PC-3 (cell line): ENCODE measurements at regions of chr1 and their contacts with region 1.

Region 1: DNA sequence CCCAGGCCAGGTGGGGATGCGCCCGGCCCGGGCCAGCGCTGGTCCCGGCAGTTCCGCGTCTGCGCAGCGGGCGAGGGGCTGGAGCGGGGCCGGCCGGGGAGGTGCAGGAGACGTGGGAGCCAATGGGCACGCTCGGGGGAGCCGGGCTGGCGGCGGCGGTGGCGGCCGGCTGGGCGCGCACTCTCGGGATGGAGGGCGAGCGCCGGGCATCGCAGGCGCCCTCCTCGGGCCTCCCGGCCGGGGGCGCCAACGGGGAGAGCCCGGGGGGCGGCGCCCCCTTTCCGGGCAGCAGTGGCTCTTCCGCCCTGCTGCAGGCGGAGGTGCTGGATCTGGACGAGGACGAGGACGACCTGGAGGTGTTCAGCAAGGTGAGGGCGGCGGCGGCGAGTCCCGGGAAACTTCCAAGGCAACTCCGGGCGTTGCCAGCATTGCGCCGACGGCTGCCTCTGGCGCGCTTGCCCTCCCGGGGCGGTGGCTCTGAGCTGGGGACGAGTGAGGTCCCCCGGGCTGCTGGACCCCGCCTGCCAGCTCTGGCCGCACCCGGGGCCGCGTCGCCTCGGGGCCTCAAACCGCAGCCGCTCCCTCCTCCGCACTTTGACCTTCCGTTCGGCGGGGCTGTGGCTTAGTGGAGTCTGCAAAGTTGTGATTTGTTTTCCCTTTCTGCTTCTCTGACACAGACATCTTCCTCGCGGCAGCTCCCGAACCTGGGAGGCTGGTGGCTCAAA is at the start of gene SNX7:
- DNase-seq: peak; percentile 77
- ATAC-seq: peak; percentile 89
- H3K4me3 ChIP-seq: peak within 1 kb of the TSS; percentile 97
- H3K27ac ChIP-seq: peak within 1 kb of the TSS; percentile 69
- H3K4me1 ChIP-seq: peaks cover 10% of the 10 kb centered on the region
- H3K27me3 ChIP-seq: no peaks in the 10 kb centered on the region
- CTCF ChIP-seq: peak; percentile 28; the same call in 1 of the 2 replicates
- total RNA-seq, gene SNX7: 36.5 and 43.3 TPM in 2 replicates

Region 2: GRCh38 chr1:98496246-98496995 is 165.3 kb before region 1 on chr1:
- CTCF ChIA-PET with region 1: no interaction called
- POLR2A ChIA-PET with region 1: no interaction called
- intact Hi-C with region 1: loop called (anchors 5 kb)
- DNase-seq: peak; percentile 85
- ATAC-seq: peak; percentile 94
- H3K4me3 ChIP-seq: peak overlapping the region; percentile 31; the same call in 1 of the 2 replicates
- H3K27ac ChIP-seq: peak overlapping the region; percentile 93
- H3K4me1 ChIP-seq: peaks cover 33% of the 10 kb centered on the region
- H3K27me3 ChIP-seq: no peaks in the 10 kb centered on the region
- CTCF ChIP-seq: no peak

Region 3: DNA sequence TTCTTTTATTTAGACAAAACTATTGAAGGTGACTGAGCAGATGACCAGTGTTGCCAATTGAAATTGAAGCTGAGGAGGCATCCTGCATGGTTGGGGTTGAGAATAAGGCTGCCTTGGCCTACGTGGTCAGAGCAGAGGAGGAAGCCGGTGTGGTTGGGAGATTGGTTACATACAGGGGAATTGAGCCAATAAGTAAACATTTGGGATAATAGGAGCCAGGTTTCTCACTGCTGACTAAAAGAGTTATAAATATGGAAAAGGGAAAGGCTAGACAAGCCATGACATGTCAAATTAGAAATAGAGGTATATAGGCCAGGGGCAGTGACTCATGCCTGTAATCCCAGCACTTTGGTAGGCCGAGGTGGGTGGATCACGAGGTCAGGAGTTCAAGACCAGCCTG is 15.6 kb after region 1 on chr1:
- CTCF ChIA-PET with region 1: no interaction called
- POLR2A ChIA-PET with region 1: interaction called, 3 read pairs
- intact Hi-C with region 1: loop called (anchors 2 kb)
- DNase-seq: peak; percentile 93
- ATAC-seq: peak; percentile 99
- H3K4me3 ChIP-seq: no peak overlapping the region
- H3K27ac ChIP-seq: peak overlapping the region; percentile 55
- H3K4me1 ChIP-seq: peaks cover 10% of the 10 kb centered on the region
- H3K27me3 ChIP-seq: no peaks in the 10 kb centered on the region
- CTCF ChIP-seq: no peak

Region 4: DNA sequence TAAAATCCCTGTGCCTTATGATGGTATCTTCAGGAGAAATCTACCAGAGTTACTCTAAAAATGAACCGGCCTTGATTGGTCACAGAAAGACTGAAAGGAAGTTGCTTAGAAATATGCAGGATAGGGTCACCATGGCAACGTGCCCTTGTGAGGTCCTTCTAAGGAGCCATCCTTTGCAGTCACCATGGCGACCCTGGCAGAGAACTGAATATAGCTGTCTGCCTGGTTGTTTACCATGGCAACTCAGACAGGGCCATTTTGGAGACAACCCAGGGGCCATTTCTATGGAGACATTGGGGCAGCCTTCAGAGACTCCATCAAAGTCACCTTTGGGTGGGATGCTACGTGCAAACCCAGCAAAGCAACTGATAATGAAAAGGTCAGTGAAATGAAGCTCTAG is 42.8 kb after region 1 on chr1:
- CTCF ChIA-PET with region 1: no interaction called
- POLR2A ChIA-PET with region 1: no interaction called
- intact Hi-C with region 1: loop called (anchors 5 kb)
- DNase-seq: no peak
- ATAC-seq: no peak
- H3K4me3 ChIP-seq: no peak overlapping the region
- H3K27ac ChIP-seq: no peak overlapping the region
- H3K4me1 ChIP-seq: peaks cover 32% of the 10 kb centered on the region
- H3K27me3 ChIP-seq: no peaks in the 10 kb centered on the region
- CTCF ChIP-seq: no peak